Transverse colon (tissue), 4 donors: ENCODE measurements at regions of chr1 and their contacts with region 1.

Region 1: DNA sequence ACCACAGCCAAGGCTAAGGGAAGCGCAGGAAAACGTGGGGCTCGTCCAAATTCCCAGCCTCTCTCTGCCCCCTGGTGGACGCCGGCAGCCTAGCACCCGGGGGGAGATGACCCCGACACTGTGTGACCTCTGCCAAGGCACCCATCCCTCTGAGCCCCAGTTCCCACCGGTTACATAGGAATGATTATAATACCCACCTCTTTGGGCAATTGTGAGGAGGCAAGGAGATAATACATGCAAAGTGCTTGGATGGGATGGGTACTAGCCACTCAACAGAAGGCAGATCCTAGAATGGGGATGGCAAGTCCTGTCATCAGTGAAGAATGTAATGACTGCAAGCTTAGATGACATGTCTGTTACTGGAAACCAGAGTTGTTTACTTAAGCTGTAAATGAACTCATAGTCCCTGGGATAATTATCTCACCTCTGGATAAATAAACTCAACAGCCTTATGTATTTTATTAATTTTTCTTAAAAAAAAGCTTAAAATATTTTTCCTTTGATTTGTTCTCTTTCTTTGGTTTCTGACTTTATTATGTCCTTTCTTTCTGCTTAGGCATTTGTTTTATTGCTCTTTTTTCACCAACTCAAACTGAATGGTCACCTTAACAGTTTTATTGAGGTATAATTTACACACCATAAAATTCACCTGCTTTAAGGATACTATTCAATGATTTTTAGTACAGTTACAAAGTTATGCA is 11.3 kb upstream of the BMP8B start:
- DNase-seq: peak; percentile 84
- H3K4me3 ChIP-seq: no peak overlapping the region
- H3K27ac ChIP-seq: peak overlapping the region; percentile 60 to 70 (median 66)
- H3K4me1 ChIP-seq: peaks cover 0 to 23% (median 12%) of the 10 kb centered on the region in 4 donors
- H3K27me3 ChIP-seq: no peaks in the 10 kb centered on the region
- CTCF ChIP-seq: peak; percentile 68 to 95 (median 83)
- EP300 ChIP-seq: no peak
- POLR2A ChIP-seq: no peak

Region 2: DNA sequence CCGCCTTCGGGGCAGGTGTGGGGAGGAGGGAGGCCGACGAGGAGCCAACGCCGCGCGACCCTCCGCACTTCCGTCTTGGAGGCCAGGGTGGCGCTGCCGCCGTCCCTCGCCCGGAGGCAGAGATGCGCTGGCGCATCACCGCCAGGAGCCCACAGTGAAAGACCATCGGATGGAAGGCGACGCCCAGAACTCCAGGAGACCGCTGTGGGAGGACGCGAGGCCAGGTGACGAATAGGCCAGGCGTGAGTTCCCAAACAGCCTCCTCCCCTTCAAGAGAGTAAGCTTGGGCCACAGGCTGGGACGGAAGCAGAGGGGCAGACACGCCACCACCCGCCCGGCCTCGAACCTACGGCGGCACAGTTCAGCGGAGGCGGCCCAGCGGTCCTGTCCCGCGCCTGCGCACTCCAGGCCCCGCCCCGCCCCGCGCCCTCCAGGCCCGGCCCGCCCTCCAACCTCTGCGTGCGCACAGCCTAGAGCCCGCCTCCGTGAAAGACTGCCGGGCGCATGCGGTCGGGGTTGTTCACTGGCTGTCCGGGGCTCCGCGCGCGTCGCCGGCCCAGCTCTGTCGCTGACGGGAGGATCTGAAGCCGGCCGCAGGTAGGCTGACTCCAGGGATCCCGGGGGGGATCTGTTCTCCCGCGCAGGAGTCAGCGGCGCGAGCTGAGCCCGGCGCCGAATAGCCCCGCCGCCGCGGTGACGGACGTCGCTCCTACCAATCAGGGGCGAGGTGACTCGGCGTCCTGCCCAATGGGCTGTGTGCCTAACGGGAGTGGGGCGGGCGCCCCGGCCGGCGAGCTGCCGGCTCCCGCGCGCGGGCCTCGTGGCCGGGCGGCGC is 1179.5 kb after region 1 on chr1 and contains the start of gene CTPS1:
- in situ Hi-C with region 1: no loop called
- intact Hi-C with region 1: loop called (anchors 5 kb)
- DNase-seq: peak; percentile 96
- H3K4me3 ChIP-seq: peak within 1 kb of the TSS; percentile 59 to 76 (median 68)
- H3K27ac ChIP-seq: peak within 1 kb of the TSS; percentile 81 to 98 (median 94)
- H3K4me1 ChIP-seq: peaks cover 10 to 28% (median 18%) of the 10 kb centered on the region in 4 donors
- H3K27me3 ChIP-seq: no peaks in the 10 kb centered on the region
- CTCF ChIP-seq: peak in 3 of 5 experiments; percentile 7 to 29 (median 8)
- EP300 ChIP-seq: no peak
- POLR2A ChIP-seq: peak; percentile 40
- total RNA-seq, gene CTPS1: 6.3 to 32.2 (median 19.7) TPM